Prostate gland (tissue), 2 donors: ENCODE measurements at regions of chr6 and their contacts with region 1.

Region 1: GRCh38 chr6:26285143-26286134 is 79.6 kb upstream of the BTN3A2 start:
- DNase-seq: peak; percentile 99
- H3K4me3 ChIP-seq: peak overlapping the region; percentile 43 to 62
- H3K27ac ChIP-seq: peak overlapping the region; percentile 80 to 90
- H3K4me1 ChIP-seq: no peaks in the 10 kb centered on the region
- H3K27me3 ChIP-seq: no peaks in the 10 kb centered on the region
- CTCF ChIP-seq: no peak
- POLR2A ChIP-seq: peak; percentile 81

Region 2: GRCh38 chr6:26054857-26055669 is 230.4 kb before region 1 on chr6:
- intact Hi-C with region 1: loop called (anchors 10 kb)
- DNase-seq: peak; percentile 92
- H3K4me3 ChIP-seq: peak overlapping the region; percentile 48 to 75
- H3K27ac ChIP-seq: peak overlapping the region; percentile 91 to 94
- H3K4me1 ChIP-seq: no peaks in the 10 kb centered on the region
- H3K27me3 ChIP-seq: no peaks in the 10 kb centered on the region
- CTCF ChIP-seq: peak in 2 of 4 experiments; percentile 34 to 59
- POLR2A ChIP-seq: peak; percentile 63

Region 3: DNA sequence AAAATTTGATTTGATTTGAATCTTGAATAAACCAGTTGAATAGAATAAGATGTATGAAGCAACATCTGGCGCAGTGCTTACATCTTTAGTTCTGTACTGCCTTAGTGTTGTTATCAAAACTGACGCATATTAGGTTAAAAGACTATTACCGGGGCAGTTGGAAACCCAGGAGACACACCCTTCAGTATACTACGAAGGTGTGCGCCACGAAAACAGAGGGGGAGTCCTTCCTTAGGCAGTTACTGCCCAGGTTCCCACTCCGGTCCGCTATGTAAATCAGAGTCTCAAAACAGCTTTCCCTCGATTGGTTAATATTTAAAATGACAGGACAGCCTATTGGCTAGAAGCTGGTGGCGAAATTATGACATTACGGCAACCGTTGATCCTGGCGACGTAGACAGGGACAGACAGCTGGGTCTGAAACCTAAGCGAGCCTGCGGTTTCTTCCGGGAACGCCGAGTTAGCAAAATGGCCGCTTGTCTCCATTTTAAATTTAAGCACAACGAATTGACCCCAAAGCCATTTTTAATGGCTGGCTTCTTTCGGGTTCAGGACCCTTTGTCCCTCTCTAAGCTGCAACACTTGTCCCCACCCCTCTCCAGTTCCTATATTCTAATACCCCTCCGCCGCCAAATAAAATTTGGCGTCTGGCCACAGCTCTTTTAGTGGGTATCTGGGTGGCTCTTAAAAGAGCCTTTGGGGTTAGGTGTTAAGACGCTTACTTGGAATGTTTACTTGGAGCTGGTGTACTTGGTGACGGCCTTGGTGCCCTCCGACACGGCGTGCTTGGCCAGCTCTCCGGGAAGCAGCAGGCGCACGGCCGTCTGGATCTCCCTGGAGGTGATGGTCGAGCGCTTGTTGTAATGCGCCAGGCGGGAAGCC is 162.4 kb before region 1 on chr6:
- intact Hi-C with region 1: loop called (anchors 2 kb)
- DNase-seq: peak; percentile 98
- H3K4me3 ChIP-seq: peak overlapping the region; percentile 81 to 85
- H3K27ac ChIP-seq: peak overlapping the region; percentile 91 to 95
- H3K4me1 ChIP-seq: peaks cover 2% of the 10 kb centered on the region
- H3K27me3 ChIP-seq: no peaks in the 10 kb centered on the region
- CTCF ChIP-seq: peak in 1 of 4 experiments; percentile 11
- POLR2A ChIP-seq: peak; percentile 36

Region 4: DNA sequence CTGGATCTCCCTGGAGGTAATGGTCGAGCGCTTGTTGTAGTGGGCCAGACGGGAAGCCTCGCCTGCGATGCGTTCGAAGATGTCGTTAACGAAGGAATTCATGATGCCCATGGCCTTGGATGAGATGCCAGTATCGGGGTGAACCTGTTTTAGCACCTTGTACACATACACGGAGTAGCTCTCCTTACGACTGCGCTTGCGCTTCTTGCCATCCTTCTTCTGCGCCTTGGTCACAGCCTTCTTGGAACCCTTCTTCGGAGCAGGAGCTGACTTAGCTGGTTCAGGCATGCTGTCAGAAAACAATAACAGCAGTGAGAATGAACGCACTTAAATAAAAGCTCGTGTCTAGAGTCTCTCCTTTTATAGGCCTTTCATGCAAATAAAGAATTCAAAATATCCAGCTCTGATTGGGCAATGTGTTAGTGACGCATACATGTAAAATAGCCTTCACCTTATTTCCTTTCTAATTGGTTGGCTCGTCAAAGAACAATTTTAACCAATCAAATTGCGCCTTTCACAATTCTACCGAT is 69.0 kb before region 1 on chr6:
- intact Hi-C with region 1: loop called (anchors 2 kb)
- DNase-seq: peak; percentile 94
- H3K4me3 ChIP-seq: peak overlapping the region; percentile 45 to 54
- H3K27ac ChIP-seq: peak overlapping the region; percentile 92
- H3K4me1 ChIP-seq: peaks cover 3% of the 10 kb centered on the region
- H3K27me3 ChIP-seq: no peaks in the 10 kb centered on the region
- CTCF ChIP-seq: no peak
- POLR2A ChIP-seq: peak; percentile 94

Region 5: DNA sequence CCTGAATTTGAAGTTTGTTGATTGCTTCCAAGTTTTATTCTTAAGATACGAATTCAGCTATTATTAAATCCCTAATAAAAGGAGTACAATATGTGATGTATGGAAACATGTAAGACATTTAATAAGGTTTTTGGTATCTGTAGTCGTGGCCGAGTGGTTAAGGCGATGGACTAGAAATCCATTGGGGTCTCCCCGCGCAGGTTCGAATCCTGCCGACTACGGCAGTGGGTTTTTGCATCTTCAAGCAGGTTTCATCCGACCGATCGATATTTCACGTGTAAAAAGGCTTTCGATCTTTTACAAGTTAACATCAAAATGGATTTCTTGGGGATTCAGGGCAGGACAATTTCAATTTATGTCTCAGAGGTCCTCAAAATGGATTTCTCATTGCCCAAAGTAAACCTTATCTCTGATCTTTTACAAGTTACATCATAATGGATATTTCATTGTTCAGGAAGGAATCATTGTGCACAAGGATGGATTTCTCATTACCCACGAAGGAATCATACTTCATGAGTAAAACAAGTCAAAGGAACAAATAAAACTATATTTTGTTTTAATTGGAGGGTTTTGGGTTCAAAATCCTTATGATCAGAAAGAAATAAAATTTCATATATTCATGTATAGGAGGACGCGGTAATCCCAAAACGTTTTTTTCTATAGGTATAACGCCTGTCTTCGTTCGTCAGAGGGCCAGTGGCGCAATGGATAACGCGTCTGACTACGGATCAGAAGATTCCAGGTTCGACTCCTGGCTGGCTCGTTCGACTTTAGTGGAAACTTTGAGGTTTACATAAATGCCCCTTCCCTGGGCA is 42.2 kb after region 1 on chr6:
- intact Hi-C with region 1: no loop called
- DNase-seq: no peak
- H3K4me3 ChIP-seq: no peak overlapping the region
- H3K27ac ChIP-seq: no peak overlapping the region
- H3K4me1 ChIP-seq: no peaks in the 10 kb centered on the region
- H3K27me3 ChIP-seq: peaks cover 21% of the 10 kb centered on the region
- CTCF ChIP-seq: no peak
- POLR2A ChIP-seq: no peak

Region 6: GRCh38 chr6:26363882-26364701 is 78.7 kb after region 1 on chr6:
- intact Hi-C with region 1: no loop called
- DNase-seq: no peak
- H3K4me3 ChIP-seq: peak overlapping the region; percentile 32 to 58
- H3K27ac ChIP-seq: peak overlapping the region; percentile 82 to 88
- H3K4me1 ChIP-seq: no peaks in the 10 kb centered on the region
- H3K27me3 ChIP-seq: no peaks in the 10 kb centered on the region
- CTCF ChIP-seq: no peak
- POLR2A ChIP-seq: no peak

Region 7: DNA sequence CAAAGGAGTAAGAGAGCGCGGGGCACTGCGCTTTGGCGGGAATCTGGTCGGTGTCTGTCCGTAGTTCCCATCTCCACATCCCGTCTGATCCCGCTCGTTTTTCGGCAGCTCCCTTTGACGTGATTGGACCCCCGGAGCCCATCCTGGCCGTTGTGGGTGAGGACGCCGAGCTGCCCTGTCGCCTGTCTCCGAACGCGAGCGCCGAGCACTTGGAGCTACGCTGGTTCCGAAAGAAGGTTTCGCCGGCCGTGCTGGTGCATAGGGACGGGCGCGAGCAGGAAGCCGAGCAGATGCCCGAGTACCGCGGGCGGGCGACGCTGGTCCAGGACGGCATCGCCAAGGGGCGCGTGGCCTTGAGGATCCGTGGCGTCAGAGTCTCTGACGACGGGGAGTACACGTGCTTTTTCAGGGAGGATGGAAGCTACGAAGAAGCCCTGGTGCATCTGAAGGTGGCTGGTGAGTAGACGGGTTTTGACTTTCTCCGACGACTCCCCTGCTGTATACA is 216.1 kb after region 1 on chr6:
- intact Hi-C with region 1: no loop called
- DNase-seq: no peak
- H3K4me3 ChIP-seq: peak overlapping the region in 1 of 2 donors; percentile 10
- H3K27ac ChIP-seq: no peak overlapping the region
- H3K4me1 ChIP-seq: no peaks in the 10 kb centered on the region
- H3K27me3 ChIP-seq: no peaks in the 10 kb centered on the region
- CTCF ChIP-seq: no peak
- POLR2A ChIP-seq: no peak

Region 8: DNA sequence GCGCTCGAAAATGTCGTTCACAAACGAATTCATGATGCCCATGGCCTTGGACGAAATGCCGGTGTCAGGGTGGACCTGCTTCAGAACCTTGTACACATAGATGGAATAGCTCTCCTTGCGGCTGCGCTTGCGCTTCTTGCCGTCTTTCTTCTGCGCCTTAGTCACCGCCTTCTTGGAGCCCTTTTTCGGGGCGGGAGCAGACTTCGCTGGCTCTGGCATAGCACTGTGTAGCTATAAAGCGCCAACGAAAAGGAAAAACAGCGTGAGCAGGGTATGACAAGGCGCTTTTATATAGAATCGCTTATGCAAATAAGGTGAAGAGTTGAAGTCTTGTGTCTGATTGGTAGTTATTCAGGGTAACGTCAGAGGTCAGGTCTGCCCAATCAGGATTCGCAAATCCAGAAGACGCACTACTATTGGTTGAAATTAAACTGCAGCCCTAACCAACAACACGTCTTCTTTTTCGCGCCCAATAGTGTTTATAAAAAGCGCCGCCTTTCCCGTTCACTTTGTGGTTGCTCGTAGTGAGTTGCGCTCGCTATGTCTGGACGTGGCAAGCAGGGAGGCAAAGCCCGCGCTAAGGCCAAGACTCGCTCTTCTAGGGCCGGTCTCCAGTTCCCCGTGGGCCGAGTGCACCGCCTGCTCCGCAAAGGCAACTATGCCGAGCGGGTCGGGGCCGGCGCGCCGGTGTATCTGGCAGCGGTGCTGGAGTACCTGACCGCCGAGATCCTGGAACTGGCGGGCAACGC is 847.3 kb after region 1 on chr6:
- intact Hi-C with region 1: loop called (anchors 10 kb)
- DNase-seq: peak; percentile 95
- H3K4me3 ChIP-seq: peak overlapping the region; percentile 48 to 49
- H3K27ac ChIP-seq: peak overlapping the region; percentile 85 to 90
- H3K4me1 ChIP-seq: no peaks in the 10 kb centered on the region
- H3K27me3 ChIP-seq: no peaks in the 10 kb centered on the region
- CTCF ChIP-seq: peak in 1 of 4 experiments; percentile 4
- POLR2A ChIP-seq: peak; percentile 92